Activated CD4-positive, alpha-beta T cell treated with anti-CD3 and anti-CD28 coated beads, Interleukin-2, amount 10 ng/mL, durations not matched to agents 24 days and 14 days (primary cell): ENCODE measurements at regions of chr2 and their contacts with region 1.

Region 1: GRCh38 chr2:112996635-112997034 is 8.6 kb upstream of the IL36A start:
- DNase-seq: peak; percentile 95
- H3K4me3 Mint-ChIP-seq: peak overlapping the region; percentile 68
- H3K27ac Mint-ChIP-seq: peak overlapping the region; percentile 84
- H3K4me1 Mint-ChIP-seq: peaks cover 28% of the 10 kb centered on the region
- H3K27me3 Mint-ChIP-seq: peaks cover 5% of the 10 kb centered on the region

Region 2: GRCh38 chr2:112916145-112916571 is 80.5 kb before region 1 on chr2:
- intact Hi-C with region 1: loop called (anchors 5 kb)
- DNase-seq: peak; percentile 62
- H3K4me3 Mint-ChIP-seq: peak overlapping the region; percentile 58
- H3K27ac Mint-ChIP-seq: peak overlapping the region; percentile 85
- H3K4me1 Mint-ChIP-seq: peaks cover 32% of the 10 kb centered on the region
- H3K27me3 Mint-ChIP-seq: no peaks in the 10 kb centered on the region